Activated B cell treated with CpG ODN at 0.5 μM for 24 hours (primary cell): ENCODE measurements at regions of chr6 and their contacts with region 1.

Region 1: GRCh38 chr6:89432875-89433251 is at the start of gene ANKRD6:
- DNase-seq: peak; percentile 95
- ATAC-seq: peak; percentile 97
- H3K4me3 Mint-ChIP-seq: peak within 1 kb of the TSS; percentile 86
- H3K27ac Mint-ChIP-seq: peak within 1 kb of the TSS; percentile 41
- H3K4me1 Mint-ChIP-seq: peaks cover 11% of the 10 kb centered on the region
- H3K27me3 Mint-ChIP-seq: peaks cover 4% of the 10 kb centered on the region
- CTCF ChIP-seq: no peak
- total RNA-seq, gene ANKRD6: 6.6 and 9.6 TPM in 2 replicates

Region 2: DNA sequence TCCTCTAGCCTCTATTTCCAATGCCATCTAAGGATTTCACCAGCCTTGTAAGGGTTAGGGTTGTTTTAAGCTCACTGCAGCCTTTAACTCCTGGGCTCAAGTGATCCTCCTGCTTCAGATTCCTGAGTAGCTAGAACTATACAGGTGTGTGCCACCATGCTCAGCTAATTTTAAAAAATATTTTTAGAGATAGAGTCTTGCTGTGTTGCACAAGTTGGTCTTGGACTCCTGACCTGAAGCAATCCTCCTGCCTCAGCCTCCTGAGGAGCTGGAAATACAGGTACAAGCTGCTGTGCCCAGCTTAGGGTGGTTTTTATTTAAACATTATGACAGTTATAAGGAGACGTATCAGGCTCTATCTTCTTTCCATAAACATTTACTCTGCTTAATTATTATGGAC is 26.6 kb after region 1 on chr6:
- CTCF ChIA-PET with region 1: no interaction called
- POLR2A ChIA-PET with region 1: no interaction called
- intact Hi-C with region 1: no loop called
- DNase-seq: no peak
- ATAC-seq: no peak
- H3K4me3 Mint-ChIP-seq: no peak overlapping the region
- H3K27ac Mint-ChIP-seq: no peak overlapping the region
- H3K4me1 Mint-ChIP-seq: no peaks in the 10 kb centered on the region
- H3K27me3 Mint-ChIP-seq: no peaks in the 10 kb centered on the region
- CTCF ChIP-seq: no peak

Region 3: GRCh38 chr6:89708316-89708715 is 275.5 kb after region 1 on chr6:
- CTCF ChIA-PET with region 1: no interaction called
- POLR2A ChIA-PET with region 1: no interaction called
- intact Hi-C with region 1: loop called (anchors 10 kb)
- DNase-seq: no peak
- ATAC-seq: no peak
- H3K4me3 Mint-ChIP-seq: no peak overlapping the region
- H3K27ac Mint-ChIP-seq: no peak overlapping the region
- H3K4me1 Mint-ChIP-seq: no peaks in the 10 kb centered on the region
- H3K27me3 Mint-ChIP-seq: no peaks in the 10 kb centered on the region
- CTCF ChIP-seq: no peak